Breast epithelium (tissue), 4 donors: ENCODE measurements at regions of chr20 and their contacts with region 1.

Region 1: GRCh38 chr20:3760655-3761348 is 6.8 kb downstream of the ADISSP start:
- DNase-seq: no peak
- H3K4me3 ChIP-seq: no peak overlapping the region
- H3K27ac ChIP-seq: peak overlapping the region in 1 of 2 donors; percentile 38
- H3K4me1 ChIP-seq: no peaks in the 10 kb centered on the region
- H3K27me3 ChIP-seq: no peaks in the 10 kb centered on the region
- CTCF ChIP-seq: no peak
- POLR2A ChIP-seq: no peak

Region 2: DNA sequence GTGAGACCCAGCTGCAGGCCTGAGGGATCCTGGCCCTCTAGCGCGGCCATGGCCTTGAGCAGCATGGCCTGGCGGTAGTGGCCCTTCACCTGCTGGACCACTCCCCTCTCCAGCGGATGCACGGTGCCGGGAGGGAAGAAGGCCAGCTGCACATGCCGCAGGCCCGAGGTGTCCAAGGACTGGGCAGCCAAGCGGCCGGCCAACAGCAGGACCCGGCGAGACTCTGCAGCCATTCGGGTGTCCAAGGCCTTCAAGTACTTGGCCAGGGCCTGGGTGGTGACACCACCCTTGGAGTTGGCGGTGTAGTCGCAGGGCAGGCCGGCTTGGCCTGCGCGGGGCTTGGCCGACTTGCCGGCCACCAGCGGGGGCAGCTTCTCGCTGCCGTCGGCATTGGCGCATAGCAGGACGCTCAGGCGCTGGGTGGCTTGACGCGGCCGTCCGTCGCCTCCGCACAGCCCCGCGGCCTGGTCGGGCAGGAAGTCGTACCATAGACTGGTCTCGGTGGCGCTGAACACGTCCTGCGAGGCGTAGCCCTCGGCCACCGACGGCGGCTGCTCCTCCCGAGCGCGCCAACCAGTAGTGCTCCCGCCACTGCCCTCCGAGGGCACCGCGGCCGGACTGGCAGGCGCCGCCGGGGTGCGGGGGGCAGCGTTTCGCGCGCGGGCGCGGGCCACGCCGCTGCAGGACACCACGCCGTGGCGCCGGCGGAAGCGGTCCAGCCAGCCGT is 24.8 kb after region 1 on chr20:
- intact Hi-C with region 1: loop called (anchors 1 kb)
- DNase-seq: no peak
- H3K4me3 ChIP-seq: peak overlapping the region; percentile 48 to 80 (median 67)
- H3K27ac ChIP-seq: peak overlapping the region; percentile 72 to 82
- H3K4me1 ChIP-seq: peaks cover 31 to 36% of the 10 kb centered on the region in 2 donors
- H3K27me3 ChIP-seq: no peaks in the 10 kb centered on the region
- CTCF ChIP-seq: no peak
- POLR2A ChIP-seq: no peak

Region 3: DNA sequence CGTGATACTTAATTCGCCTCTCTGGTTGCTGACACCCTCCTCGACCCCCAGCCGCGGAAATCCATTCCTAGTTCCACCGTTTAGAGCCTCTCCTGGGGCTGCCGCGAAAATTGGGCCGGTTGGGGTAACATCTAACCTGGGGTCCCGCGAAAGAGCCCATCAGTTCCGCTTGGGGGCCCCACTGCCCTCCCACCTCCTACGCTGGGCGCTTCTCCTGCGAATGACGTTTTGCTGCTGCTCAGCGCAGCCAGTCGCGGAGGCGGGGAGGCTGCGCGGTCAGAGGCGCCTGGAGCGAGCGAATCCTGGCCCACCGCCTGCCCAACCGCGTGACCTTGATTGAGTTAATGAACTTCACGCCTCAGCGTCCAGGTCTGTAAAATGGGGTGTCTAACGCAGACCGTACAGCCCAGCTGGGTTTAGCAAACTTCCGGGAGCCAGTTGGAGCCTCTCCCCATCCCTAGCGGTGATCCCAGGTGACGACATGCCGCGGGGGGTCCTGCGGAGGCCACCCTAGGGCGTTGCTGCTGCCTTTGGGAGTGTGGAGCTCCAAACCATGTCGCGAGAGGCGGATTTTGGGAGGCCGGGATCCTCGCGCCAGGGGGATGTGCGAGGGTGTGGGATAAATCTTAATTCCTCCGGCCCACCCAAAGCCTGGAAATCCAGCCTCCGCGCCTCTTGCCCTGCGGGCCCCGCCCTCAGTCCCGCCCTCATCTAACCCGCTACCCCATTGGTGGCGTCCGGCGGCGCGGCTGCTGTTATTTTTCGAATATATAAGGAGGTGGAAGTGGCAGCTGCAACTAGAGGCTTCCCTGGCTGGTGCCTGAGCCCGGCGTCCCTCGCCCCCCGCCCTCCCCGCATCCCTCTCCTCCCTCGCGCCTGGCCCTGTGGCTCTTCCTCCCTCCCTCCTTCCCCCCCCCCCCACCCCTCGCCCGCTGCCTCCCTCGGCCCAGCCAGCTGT is 35.0 kb after region 1 on chr20 and contains the start of gene CDC25B:
- intact Hi-C with region 1: loop called (anchors 1 kb)
- DNase-seq: peak; percentile 91 to 95
- H3K4me3 ChIP-seq: peak within 1 kb of the TSS; percentile 59 to 93 (median 69)
- H3K27ac ChIP-seq: peak within 1 kb of the TSS; percentile 97 to 100
- H3K4me1 ChIP-seq: peaks cover 0 to 8% of the 10 kb centered on the region in 2 donors
- H3K27me3 ChIP-seq: no peaks in the 10 kb centered on the region
- CTCF ChIP-seq: peak; percentile 74 to 83 (median 75)
- POLR2A ChIP-seq: peak; percentile 15
- total RNA-seq, gene CDC25B: 18.1 to 25.0 (median 22.0) TPM